ENCODE measurements at regions of chr6 and their contacts with region 1.

Region 1: GRCh38 chr6:10747251-10747972 is at the start of gene TMEM14B:
- DNase-seq: peak; percentile 98 to 100 (median 99)
- ATAC-seq: peak; percentile 98
- H3K4me3 ChIP-seq: peak within 1 kb of the TSS; percentile 73 to 79
- H3K4me3 Mint-ChIP-seq: peak within 1 kb of the TSS; percentile 96
- H3K27ac ChIP-seq: peak within 1 kb of the TSS; percentile 77 to 79
- H3K27ac Mint-ChIP-seq: peak within 1 kb of the TSS; percentile 97
- H3K4me1 ChIP-seq: peaks cover 33% of the 10 kb centered on the region
- H3K4me1 Mint-ChIP-seq: peaks cover 57% of the 10 kb centered on the region
- H3K27me3 ChIP-seq: no peaks in the 10 kb centered on the region
- H3K27me3 Mint-ChIP-seq: no peaks in the 10 kb centered on the region
- CTCF ChIP-seq: no peak
- total RNA-seq, gene TMEM14B: 36.5 to 41.2 TPM

Region 2: GRCh38 chr6:10404107-10404798 is 343.2 kb before region 1 on chr6:
- CTCF ChIA-PET with region 1: no interaction called
- POLR2A ChIA-PET with region 1: no interaction called
- intact Hi-C with region 1: loop called in 1 of 2 experiments (anchors 2 kb)
- DNase-seq: peak; percentile 50 to 91 (median 77)
- ATAC-seq: peak; percentile 87
- H3K4me3 ChIP-seq: peak overlapping the region; percentile 55 to 71
- H3K4me3 Mint-ChIP-seq: peak overlapping the region; percentile 73
- H3K27ac ChIP-seq: peak overlapping the region in 1 of 2 experiments; percentile 56
- H3K27ac Mint-ChIP-seq: peak overlapping the region; percentile 75
- H3K4me1 ChIP-seq: peaks cover 13% of the 10 kb centered on the region
- H3K4me1 Mint-ChIP-seq: peaks cover 15% of the 10 kb centered on the region
- H3K27me3 ChIP-seq: peaks cover 5 to 11% of the 10 kb centered on the region in 2 experiments
- H3K27me3 Mint-ChIP-seq: peaks cover 47% of the 10 kb centered on the region
- CTCF ChIP-seq: no peak

Region 3: DNA sequence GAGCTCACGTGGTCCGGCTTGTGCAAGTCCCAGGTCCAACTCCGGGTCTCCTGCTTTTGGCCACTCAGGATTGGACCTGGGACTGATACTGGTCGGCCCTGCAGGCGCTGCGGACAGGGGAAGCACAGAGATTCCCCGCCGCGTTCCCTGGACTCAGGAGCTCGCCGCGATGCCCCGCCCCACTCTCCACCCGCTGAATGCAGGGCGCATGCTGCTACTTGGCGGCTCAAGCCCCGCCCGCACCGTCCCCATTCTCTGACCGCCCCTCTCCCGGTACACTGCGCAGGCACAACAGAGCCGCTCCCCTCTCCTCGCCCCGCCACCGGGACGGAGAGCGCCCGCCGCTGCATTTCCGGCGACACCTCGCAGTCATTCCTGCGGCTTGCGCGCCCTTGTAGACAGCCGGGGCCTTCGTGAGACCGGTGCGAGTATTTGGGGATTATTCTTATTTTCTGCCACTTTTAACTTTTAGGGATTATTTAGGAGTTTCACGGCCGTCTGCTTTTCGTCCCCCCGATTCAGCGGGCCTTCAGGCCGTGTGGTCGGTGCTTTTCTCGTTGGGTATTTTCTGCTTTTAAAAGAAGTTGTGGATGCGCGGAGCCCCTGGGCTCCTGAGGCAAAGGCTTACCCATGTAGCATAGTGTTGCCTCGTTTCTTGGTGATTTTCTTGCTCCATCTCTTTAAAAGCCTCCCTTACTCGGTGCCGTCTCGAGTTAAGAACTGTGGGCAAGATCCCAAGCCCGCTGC is 24.4 kb before region 1 on chr6 and contains the start of gene TMEM14C:
- CTCF ChIA-PET with region 1: interaction called, 4 read pairs
- POLR2A ChIA-PET with region 1: interaction called, 35 read pairs
- intact Hi-C with region 1: loop called (anchors 1 kb)
- DNase-seq: peak in 8 of 9 experiments; percentile 60 to 90 (median 82)
- ATAC-seq: peak; percentile 72
- H3K4me3 ChIP-seq: peak within 1 kb of the TSS; percentile 67 to 70
- H3K4me3 Mint-ChIP-seq: peak within 1 kb of the TSS; percentile 97
- H3K27ac ChIP-seq: peak within 1 kb of the TSS; percentile 49 to 65
- H3K27ac Mint-ChIP-seq: peak within 1 kb of the TSS; percentile 98
- H3K4me1 ChIP-seq: peaks cover 30% of the 10 kb centered on the region
- H3K4me1 Mint-ChIP-seq: peaks cover 64% of the 10 kb centered on the region
- H3K27me3 ChIP-seq: no peaks in the 10 kb centered on the region
- H3K27me3 Mint-ChIP-seq: no peaks in the 10 kb centered on the region
- CTCF ChIP-seq: no peak
- total RNA-seq, gene TMEM14C: 7.5 to 8.5 TPM

Region 4: GRCh38 chr6:10837995-10838793 is 90.8 kb after region 1 on chr6 and contains the start of gene MAK:
- CTCF ChIA-PET with region 1: no interaction called
- POLR2A ChIA-PET with region 1: no interaction called
- intact Hi-C with region 1: loop called in 1 of 2 experiments (anchors 5 kb)
- DNase-seq: peak; percentile 74 to 94 (median 83)
- ATAC-seq: peak; percentile 96
- H3K4me3 ChIP-seq: peak within 1 kb of the TSS; percentile 53 to 56
- H3K4me3 Mint-ChIP-seq: peak within 1 kb of the TSS; percentile 73
- H3K27ac ChIP-seq: peak within 1 kb of the TSS in 1 of 2 experiments; percentile 30
- H3K27ac Mint-ChIP-seq: no peak within 1 kb of the TSS
- H3K4me1 ChIP-seq: peaks cover 22% of the 10 kb centered on the region
- H3K4me1 Mint-ChIP-seq: peaks cover 20% of the 10 kb centered on the region
- H3K27me3 ChIP-seq: peaks cover 11 to 25% of the 10 kb centered on the region in 2 experiments
- H3K27me3 Mint-ChIP-seq: peaks cover 55% of the 10 kb centered on the region
- CTCF ChIP-seq: no peak
- total RNA-seq, gene MAK: 0.62 to 0.89 TPM

Measured in CD8-positive, alpha-beta T cell (primary cell).